ENCODE measurements at regions of chr4 and their contacts with region 1.

Region 1: GRCh38 chr4:52545099-52546069 is 113.7 kb downstream of the USP46 start:
- DNase-seq: peak; percentile 38 to 48
- ATAC-seq: peak; percentile 77 to 88
- H3K4me3 ChIP-seq: no peak overlapping the region
- H3K27ac ChIP-seq: no peak overlapping the region
- H3K4me1 ChIP-seq: no peaks in the 10 kb centered on the region
- CTCF ChIP-seq: peak; percentile 71
- EP300 ChIP-seq: no peak
- POLR2A ChIP-seq: no peak
- RAD21 ChIP-seq: peak; percentile 84 to 88

Region 2: GRCh38 chr4:52407545-52407944 is 137.8 kb before region 1 on chr4:
- CTCF ChIA-PET with region 1: no interaction called
- POLR2A ChIA-PET with region 1: no interaction called
- DNase-seq: no peak
- ATAC-seq: no peak
- H3K4me3 ChIP-seq: no peak overlapping the region
- H3K27ac ChIP-seq: no peak overlapping the region
- H3K4me1 ChIP-seq: no peaks in the 10 kb centered on the region
- CTCF ChIP-seq: no peak
- EP300 ChIP-seq: no peak
- POLR2A ChIP-seq: no peak
- RAD21 ChIP-seq: no peak

Region 3: DNA sequence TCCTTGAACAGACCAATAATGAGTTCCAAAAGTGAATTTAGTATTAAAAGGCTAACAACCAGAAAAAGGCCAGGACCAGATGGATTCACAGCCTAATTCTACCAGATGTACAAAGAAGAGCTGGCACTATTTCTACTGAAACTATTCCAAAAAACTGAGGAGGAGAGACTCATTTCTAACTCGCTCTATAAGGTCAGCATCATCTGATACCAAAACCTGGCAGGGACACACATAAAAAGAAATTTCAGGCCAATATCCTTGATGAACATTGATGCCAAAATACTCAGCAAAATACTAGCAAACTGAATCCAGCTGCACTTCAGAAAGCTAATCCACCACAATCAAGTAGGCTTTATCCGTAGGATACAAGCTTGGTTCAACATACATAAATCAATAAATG is 149.6 kb after region 1 on chr4:
- CTCF ChIA-PET with region 1: no interaction called
- POLR2A ChIA-PET with region 1: no interaction called
- DNase-seq: no peak
- ATAC-seq: no peak
- H3K4me3 ChIP-seq: no peak overlapping the region
- H3K27ac ChIP-seq: no peak overlapping the region
- H3K4me1 ChIP-seq: no peaks in the 10 kb centered on the region
- CTCF ChIP-seq: no peak
- EP300 ChIP-seq: no peak
- POLR2A ChIP-seq: no peak
- RAD21 ChIP-seq: no peak

Region 4: DNA sequence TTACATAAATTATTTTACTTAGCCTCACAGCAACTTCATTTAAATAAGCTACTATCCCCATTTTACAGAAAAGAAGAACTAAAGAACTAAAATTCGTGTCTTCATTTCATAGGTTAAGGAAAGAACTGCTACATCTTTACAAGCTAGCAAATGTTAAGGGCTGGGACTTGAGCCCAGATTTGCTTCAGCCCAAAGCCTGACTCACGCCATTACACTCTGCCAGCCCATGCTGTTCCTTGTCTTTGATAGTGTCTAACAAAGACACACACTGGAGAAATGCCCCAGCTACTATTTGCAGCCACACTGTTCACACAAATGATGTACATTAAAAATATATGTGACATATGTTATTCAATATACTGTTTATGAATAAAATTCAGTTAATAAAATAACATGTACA is 234.8 kb after region 1 on chr4:
- CTCF ChIA-PET with region 1: no interaction called
- POLR2A ChIA-PET with region 1: no interaction called
- DNase-seq: no peak
- ATAC-seq: no peak
- H3K4me3 ChIP-seq: no peak overlapping the region
- H3K27ac ChIP-seq: no peak overlapping the region
- H3K4me1 ChIP-seq: no peaks in the 10 kb centered on the region
- CTCF ChIP-seq: no peak
- EP300 ChIP-seq: no peak
- POLR2A ChIP-seq: no peak
- RAD21 ChIP-seq: no peak

Region 5: GRCh38 chr4:52976523-52977230 is 431.3 kb after region 1 on chr4:
- CTCF ChIA-PET with region 1: interaction called, 57 read pairs
- POLR2A ChIA-PET with region 1: no interaction called
- DNase-seq: no peak
- ATAC-seq: no peak
- H3K4me3 ChIP-seq: no peak overlapping the region
- H3K27ac ChIP-seq: no peak overlapping the region
- H3K4me1 ChIP-seq: no peaks in the 10 kb centered on the region
- CTCF ChIP-seq: no peak
- EP300 ChIP-seq: no peak
- POLR2A ChIP-seq: no peak
- RAD21 ChIP-seq: no peak

Region 6: DNA sequence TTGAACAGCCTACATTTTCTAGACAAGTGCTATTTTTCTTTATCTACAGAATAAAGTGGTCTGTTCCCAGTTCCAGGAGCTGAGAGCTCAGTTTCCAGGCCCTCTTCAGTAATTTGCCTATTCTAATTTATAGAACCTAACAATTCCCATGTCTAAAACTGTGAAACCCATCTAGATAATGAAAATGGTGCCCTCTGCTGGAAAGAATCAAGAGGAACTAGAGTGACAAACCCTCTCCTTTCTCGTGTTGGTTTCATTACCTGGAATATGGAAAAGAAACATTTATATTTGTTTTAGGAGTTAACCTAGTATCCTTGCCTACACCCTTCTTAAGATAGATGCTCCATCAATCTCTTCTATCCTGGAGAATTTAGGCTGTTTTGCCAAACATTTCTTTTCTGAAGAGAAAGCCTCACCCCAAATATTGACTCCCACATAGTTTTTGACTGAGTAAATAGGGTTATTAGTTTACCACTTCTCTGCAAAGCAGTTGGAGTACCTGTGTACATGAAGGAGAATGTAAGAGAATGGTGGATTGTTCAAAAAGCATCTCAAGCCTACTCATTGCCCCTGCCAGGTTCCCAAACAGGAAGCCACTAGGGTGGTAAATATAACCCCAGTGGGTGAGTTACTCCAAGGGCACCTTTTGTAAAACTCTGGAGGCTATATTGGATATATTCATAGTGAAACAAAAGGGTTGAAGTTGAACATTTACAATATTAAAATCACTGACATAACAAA is 438.3 kb after region 1 on chr4:
- CTCF ChIA-PET with region 1: interaction called, 57 read pairs
- POLR2A ChIA-PET with region 1: no interaction called
- DNase-seq: peak; percentile 10 to 48
- ATAC-seq: peak in 1 of 2 experiments; percentile 75; a peak in 3 of 6 replicates
- H3K4me3 ChIP-seq: no peak overlapping the region
- H3K27ac ChIP-seq: no peak overlapping the region
- H3K4me1 ChIP-seq: no peaks in the 10 kb centered on the region
- CTCF ChIP-seq: peak; percentile 59
- EP300 ChIP-seq: no peak
- POLR2A ChIP-seq: no peak
- RAD21 ChIP-seq: peak; percentile 54 to 55

Measured in A549 (cell line).